GM13976 (cell line): ENCODE measurements at regions of chr3 and their contacts with region 1.

Region 1: DNA sequence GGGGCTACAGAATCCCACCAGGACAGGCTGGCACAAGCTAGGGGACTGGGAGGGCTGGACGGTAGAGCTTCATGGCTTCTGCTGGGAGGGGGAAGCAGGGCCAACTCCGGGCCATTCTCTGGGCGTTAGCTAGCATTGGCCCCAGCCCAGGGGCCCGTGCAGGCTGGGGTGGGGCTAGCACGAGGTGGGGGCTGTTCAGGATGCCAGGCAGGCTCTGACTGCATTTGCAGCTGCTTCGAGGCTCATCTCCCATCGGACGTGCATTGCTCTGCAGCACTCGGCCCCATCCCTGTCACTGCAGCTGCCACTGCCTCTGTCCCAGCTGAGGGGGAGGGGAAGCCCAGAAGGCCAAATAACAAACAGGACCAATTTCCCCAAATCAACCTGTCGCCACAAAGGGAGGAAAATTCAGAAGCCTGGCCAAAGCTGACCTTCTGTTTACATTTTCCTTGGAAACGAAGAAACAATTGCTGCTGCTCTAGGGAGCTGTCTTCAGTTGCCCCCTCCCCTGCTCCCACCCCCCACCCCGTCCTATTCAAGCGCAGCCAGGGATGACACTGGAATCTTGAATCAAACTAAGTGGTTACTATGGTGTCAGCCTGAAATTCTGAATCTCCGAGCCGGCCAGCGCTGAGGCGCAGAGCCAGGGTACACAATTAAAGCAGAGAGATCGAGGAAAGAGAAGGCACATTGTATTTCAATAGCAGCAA is 138.8 kb upstream of the PRR20G start:
- DNase-seq: peak; percentile 15
- CTCF ChIP-seq: no peak

Region 2: DNA sequence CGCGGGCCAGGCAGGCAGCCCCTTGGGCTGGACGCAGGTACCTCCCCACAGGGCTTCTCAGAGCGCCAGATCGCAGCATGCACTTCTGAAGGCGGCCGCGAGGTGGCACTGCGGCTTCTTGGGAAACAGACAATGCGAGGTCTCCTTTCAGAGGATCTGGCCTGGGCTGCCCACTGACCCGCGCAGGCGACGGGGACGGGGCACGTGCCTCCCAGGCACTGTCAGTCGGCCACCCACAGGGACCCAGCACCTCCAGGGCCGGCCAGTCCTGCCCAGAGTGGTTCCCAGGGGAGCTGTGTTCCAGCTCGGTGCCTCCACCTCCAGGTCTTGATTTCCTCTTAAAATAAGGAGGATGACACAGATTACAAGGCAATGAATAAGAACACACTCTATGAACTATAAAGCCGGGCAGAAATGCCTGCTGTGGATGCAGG is 747.3 kb before region 1 on chr3:
- in situ Hi-C with region 1: loop called (anchors 25 kb)
- DNase-seq: peak; percentile 91
- CTCF ChIP-seq: peak; percentile 95